CD4-positive, alpha-beta memory T cell (primary cell): ENCODE measurements at regions of chr12 and their contacts with region 1.

Region 1: GRCh38 chr12:121773011-121773777 is 20.3 kb downstream of the RHOF start:
- DNase-seq: peak; percentile 76 to 82 (median 78)
- H3K4me3 ChIP-seq: no peak overlapping the region
- H3K4me3 Mint-ChIP-seq: no peak overlapping the region
- H3K27ac ChIP-seq: no peak overlapping the region
- H3K27ac Mint-ChIP-seq: peak overlapping the region; percentile 68 to 87 (median 78)
- H3K4me1 ChIP-seq: peaks cover 23% of the 10 kb centered on the region
- H3K4me1 Mint-ChIP-seq: peaks cover 5 to 14% (median 11%) of the 10 kb centered on the region in 4 donors
- H3K27me3 ChIP-seq: no peaks in the 10 kb centered on the region
- H3K27me3 Mint-ChIP-seq: no peaks in the 10 kb centered on the region

Region 2: DNA sequence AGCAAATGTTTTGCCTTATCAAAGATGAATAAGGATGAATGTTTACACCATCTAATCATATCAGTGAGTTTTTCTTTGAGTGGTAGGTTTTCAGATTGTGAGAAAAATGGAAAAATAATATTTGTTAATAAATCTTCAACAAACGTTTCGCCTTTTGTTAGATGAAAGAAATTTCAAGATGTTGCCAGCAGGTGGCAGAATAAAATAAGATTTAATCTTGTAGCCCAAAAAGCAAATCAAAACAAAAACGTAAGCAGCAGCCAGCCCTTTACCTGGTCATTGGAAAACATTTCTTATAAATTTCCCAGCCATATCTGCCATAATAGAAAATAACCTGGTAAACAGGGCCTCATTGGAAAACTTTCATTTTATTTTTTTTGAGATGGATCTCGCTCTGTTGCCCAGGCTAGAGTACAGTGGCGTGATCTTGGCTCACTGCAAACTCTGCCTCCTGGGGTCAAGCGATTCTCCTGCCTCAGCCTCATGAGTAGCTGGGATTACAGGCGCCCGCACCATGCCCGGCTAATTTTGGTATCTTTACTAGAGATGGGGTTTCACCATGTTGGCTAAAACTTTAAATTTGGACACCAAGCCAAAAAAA is 76.0 kb before region 1 on chr12:
- CTCF ChIA-PET with region 1: interaction called, 120 read pairs
- POLR2A ChIA-PET with region 1: interaction called, 3 read pairs
- intact Hi-C with region 1: loop called (anchors 1 kb)
- DNase-seq: peak in 4 of 5 donors; percentile 61 to 70 (median 67)
- H3K4me3 ChIP-seq: no peak overlapping the region
- H3K4me3 Mint-ChIP-seq: no peak overlapping the region
- H3K27ac ChIP-seq: no peak overlapping the region
- H3K27ac Mint-ChIP-seq: peak overlapping the region in 1 of 7 donors; percentile 19
- H3K4me1 ChIP-seq: no peaks in the 10 kb centered on the region
- H3K4me1 Mint-ChIP-seq: peaks cover 0 to 5% (median 2%) of the 10 kb centered on the region in 4 donors
- H3K27me3 ChIP-seq: no peaks in the 10 kb centered on the region
- H3K27me3 Mint-ChIP-seq: no peaks in the 10 kb centered on the region

Region 3: GRCh38 chr12:121712461-121713256 is 60.5 kb before region 1 on chr12 and contains the start of gene TMEM120B:
- CTCF ChIA-PET with region 1: interaction called, 16 read pairs
- POLR2A ChIA-PET with region 1: interaction called, 8 read pairs
- intact Hi-C with region 1: no loop called
- DNase-seq: peak; percentile 78 to 89 (median 84)
- H3K4me3 ChIP-seq: peak within 1 kb of the TSS; percentile 57 to 93
- H3K4me3 Mint-ChIP-seq: peak within 1 kb of the TSS; percentile 91 to 98 (median 96)
- H3K27ac ChIP-seq: peak within 1 kb of the TSS; percentile 63
- H3K27ac Mint-ChIP-seq: peak within 1 kb of the TSS; percentile 85 to 97 (median 95)
- H3K4me1 ChIP-seq: peaks cover 16% of the 10 kb centered on the region
- H3K4me1 Mint-ChIP-seq: peaks cover 7 to 26% (median 17%) of the 10 kb centered on the region in 4 donors
- H3K27me3 ChIP-seq: no peaks in the 10 kb centered on the region
- H3K27me3 Mint-ChIP-seq: no peaks in the 10 kb centered on the region
- total RNA-seq, gene TMEM120B: 11.3 to 12.8 TPM

Region 4: DNA sequence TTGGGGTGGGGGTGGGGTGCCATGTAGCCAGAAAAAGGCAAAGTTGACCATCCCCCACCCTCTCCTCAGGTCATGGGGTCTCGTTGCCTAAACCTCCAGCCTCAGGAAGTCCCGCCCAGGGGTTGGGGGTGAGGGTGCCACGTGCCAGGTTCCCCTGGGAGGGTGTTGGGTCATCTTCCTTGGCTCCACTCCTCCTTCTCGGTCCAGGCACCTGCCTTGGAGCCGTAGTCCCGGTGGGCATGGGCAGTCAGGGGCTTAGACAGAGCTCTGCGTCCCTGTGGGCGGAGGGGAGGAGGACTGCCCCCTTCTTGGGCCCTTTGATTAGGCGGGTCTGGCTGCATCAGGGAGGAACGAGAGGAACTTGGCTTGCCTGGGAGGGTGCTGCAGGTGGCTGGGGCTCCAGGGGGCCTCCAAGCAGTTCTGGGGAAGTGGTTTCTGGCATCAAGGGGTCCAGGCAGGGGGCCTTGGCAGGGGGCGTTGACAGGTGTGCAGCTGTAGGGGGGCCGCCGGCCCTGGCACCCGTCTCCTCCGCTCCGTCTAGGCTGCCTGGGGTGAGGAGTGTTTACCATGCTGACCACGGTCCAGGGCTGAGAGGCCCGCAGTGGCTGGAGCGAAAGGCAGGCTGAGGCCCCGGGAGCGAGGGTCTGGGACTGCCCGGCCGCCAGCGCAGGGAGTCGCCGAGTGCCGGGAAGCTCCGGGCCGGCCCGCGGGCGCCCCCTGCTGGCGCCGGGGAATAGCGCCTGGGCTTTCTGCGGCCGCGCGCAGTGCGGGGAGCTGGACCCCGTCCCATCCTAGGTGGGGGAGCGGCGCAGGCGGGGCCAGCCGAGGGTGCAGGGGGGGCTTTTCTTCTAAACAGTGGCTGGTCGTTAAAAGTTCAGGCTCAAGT is 38.5 kb after region 1 on chr12:
- CTCF ChIA-PET with region 1: interaction called, 32 read pairs
- POLR2A ChIA-PET with region 1: interaction called, 2,727 read pairs
- intact Hi-C with region 1: loop called (anchors 1 kb)
- DNase-seq: peak; percentile 61 to 81 (median 74)
- H3K4me3 ChIP-seq: peak overlapping the region; percentile 42 to 63
- H3K4me3 Mint-ChIP-seq: peak overlapping the region; percentile 80 to 90 (median 86)
- H3K27ac ChIP-seq: peak overlapping the region; percentile 50
- H3K27ac Mint-ChIP-seq: peak overlapping the region in 6 of 7 donors; percentile 42 to 93 (median 80)
- H3K4me1 ChIP-seq: peaks cover 61% of the 10 kb centered on the region
- H3K4me1 Mint-ChIP-seq: peaks cover 26 to 67% (median 49%) of the 10 kb centered on the region in 4 donors
- H3K27me3 ChIP-seq: no peaks in the 10 kb centered on the region
- H3K27me3 Mint-ChIP-seq: no peaks in the 10 kb centered on the region